Adrenal gland (tissue), 19 donors: ENCODE measurements at regions of chr3 and their contacts with region 1.

Region 1: DNA sequence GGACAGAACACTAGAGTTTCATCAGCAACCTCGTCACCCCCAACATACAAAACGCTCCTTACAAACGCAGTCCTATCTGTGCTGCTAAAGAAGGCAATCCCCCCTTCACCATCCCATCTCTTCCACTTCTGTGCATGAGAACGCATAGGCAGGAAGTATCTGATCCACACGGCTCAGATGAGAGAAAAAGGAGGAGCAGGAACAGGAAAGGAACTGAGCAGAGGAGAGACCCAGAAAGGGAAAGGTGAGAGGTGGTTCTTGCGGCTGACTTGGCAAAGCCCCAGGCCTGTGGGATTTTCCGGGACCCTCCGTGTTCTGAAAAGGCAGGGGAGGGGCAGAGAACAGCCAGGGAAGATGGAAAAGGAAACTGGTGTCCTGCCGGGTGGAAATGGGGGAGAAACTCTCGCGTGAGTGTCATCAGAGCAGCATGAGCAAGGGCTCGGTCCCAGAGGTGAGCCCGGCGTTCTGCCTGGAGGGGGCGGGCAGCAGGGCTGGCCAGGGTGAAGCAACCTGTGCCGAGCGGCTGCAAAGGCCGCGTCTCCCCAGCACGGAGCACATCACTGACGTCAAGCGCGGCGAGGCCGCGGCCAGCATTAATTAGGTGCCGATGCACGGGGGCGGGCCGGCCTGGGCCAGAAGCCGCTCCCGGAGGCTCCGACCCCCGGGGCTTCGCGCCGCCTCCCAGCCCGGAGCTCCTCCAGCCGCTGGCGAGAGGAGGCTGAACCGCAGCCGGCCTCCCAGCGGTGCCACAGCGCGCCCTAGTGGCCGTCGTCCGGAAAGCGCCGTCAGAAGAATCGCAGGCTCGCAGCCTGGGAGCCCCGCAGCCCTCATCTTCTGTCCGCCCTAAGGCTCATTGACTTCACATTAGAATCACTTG is 35.8 kb downstream of the CPN2 start:
- DNase-seq: peak; percentile 80 to 90 (median 85)
- H3K4me3 ChIP-seq: peak overlapping the region in 1 of 4 donors; percentile 44
- H3K27ac ChIP-seq: peak overlapping the region in 4 of 5 donors; percentile 35 to 75 (median 51)
- H3K4me1 ChIP-seq: peaks cover 10 to 23% of the 10 kb centered on the region in 2 donors
- H3K27me3 ChIP-seq: no peaks in the 10 kb centered on the region
- CTCF ChIP-seq: peak; percentile 83 to 98 (median 92)
- POLR2A ChIP-seq: peak in 1 of 2 donors; percentile 27

Region 2: DNA sequence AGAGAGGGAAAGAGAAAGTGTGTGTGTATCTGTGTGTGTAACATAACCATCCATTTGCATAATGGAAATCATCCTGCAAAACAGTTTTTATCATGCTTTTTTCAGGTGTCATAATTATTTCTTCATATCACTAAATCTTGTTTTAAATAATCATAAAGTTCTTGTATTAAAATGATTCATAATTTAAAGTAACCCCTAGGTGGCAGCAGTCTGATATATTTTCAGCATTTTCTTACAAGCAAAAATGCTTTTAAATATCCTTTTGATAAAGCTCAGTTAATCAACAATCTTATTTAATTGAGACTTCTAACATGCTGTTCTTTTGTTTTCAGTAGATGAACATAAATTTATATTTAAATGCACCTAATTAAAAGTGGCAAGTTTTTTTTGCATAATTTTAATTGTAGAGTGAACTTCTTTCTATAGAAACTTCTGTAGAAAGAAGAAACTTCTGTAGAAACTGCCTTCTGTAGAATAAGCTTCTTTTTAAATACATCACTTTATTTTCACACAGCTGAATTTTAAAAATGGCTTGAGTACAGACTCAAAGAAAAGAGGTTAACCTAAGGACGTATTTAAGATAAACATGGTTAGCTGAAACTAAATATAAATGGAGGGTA is 649.8 kb before region 1 on chr3:
- intact Hi-C with region 1: loop called in 1 of 2 experiments (anchors 10 kb)
- DNase-seq: no peak
- H3K4me3 ChIP-seq: no peak overlapping the region
- H3K27ac ChIP-seq: no peak overlapping the region
- H3K4me1 ChIP-seq: peaks cover 0 to 13% of the 10 kb centered on the region in 2 donors
- H3K27me3 ChIP-seq: no peaks in the 10 kb centered on the region
- CTCF ChIP-seq: peak; percentile 34 to 63 (median 52)
- POLR2A ChIP-seq: no peak

Region 3: DNA sequence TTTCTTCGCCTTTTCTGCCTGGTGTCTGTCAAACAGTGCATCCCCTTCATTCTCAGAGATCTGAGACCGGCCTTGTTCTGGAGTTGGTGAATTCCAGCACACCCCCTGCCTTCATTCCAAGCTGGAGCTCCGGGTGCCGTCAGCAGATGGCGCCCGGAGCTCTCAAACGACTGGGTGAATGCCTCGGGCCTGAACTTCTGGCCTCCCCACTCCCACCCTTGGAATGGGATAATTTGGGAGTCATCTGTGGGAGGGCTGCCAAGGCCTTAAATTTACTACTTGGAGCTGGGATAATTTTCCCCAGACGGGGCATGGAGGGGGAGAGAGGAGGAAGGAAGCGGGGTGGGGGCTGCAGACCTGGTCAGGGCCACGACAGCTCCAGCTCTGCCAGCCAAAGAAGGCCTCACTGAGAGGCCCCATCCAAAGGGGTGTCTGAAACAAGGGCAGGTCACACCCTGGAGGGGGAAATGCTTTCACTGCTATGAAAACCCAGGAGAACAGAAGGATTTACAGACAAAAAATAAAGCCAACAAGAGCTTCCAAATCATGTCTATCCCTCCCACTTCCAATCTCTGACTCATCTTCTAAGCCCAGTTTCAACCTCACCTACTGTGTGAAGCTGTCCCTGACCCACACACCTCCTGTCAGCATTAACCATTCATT is 534.4 kb before region 1 on chr3:
- intact Hi-C with region 1: loop called (anchors 2 to 5 kb)
- DNase-seq: peak; percentile 68 to 84 (median 79)
- H3K4me3 ChIP-seq: no peak overlapping the region
- H3K27ac ChIP-seq: peak overlapping the region in 1 of 5 donors; percentile 78
- H3K4me1 ChIP-seq: peaks cover 0 to 2% of the 10 kb centered on the region in 2 donors
- H3K27me3 ChIP-seq: peaks cover 16% of the 10 kb centered on the region
- CTCF ChIP-seq: peak; percentile 63 to 80 (median 69)
- POLR2A ChIP-seq: no peak

Region 4: DNA sequence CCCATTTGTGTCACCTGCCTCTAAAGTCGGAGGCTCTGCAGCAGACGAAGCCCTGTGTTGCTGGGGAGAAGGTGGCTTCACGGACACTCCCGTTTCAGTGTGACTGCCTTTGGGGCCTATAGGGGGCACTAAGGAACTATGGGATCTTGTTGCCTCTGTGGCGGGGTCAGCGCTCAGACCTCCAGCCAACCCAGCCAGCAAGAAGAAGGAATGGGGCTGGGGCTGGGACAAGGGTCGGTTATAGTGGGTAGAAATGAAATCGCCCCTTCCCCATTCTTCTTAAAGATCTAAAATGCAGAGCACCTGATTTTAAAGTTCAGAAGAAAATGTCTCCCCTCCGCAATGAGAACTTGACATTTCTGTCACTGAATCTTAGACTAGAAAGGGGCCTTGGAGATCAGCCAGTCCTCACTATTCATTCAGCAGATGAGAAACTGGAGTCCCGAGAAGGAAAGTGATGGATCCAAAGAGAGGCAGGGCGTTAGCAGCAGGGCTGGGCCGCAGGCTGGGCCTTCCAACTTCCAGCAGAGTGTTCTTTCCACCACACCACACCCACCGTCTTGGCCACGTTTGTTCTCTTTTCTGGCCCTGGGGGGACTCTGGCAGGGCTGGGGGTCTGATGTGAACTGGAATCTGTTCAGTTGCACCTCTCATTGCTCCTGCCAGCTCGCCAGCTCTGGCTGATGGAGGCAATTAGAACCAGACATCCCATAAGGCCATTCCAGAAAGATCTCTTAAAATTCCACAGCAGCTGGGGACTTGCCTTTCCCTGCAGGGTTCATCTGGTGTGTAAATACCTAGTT is 526.9 kb before region 1 on chr3:
- intact Hi-C with region 1: loop called (anchors 2 to 5 kb)
- DNase-seq: peak; percentile 48 to 77 (median 70)
- H3K4me3 ChIP-seq: no peak overlapping the region
- H3K27ac ChIP-seq: peak overlapping the region in 1 of 5 donors; percentile 30
- H3K4me1 ChIP-seq: no peaks in the 10 kb centered on the region
- H3K27me3 ChIP-seq: no peaks in the 10 kb centered on the region
- CTCF ChIP-seq: peak; percentile 57 to 86 (median 76)
- POLR2A ChIP-seq: no peak

Region 5: DNA sequence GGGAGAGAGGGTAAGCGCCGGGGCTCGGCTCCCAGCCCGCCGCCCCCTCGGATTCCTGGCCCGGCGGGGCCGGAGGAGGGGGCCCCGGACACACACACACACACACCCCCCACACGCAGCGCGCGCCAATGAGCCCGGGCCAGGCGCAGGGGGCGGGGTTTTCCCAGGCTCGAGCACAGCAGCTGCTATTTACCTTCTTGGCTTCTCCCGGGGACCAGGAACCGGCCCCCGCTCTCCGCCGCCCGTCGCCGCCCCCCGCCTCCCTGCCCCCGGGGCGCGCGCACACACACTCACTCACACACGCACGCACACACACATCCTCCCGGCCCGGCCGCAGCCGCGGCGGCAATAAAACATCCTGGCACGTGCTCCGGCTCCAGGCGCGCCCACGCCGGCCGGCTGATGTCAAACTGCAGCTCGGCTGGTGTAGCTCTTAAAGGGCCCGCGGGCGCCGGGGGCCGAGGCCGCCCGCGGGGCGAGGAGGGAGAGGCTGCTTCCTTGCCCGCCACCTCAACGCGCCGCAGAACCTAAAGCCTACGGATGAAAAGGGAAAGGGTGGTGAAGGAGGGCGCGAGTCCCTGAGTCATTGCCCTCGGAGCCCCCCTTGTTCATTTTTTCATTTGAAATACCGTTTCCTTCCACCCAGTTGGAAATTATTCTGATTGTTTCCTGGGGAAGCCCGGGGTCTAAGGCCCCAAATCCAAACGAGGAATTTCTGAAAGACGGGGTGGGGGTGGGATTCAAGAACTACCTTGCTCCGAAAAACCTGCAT is 180.4 kb before region 1 on chr3:
- intact Hi-C with region 1: loop called (anchors 2 to 5 kb)
- DNase-seq: peak; percentile 86 to 94 (median 92)
- H3K4me3 ChIP-seq: peak overlapping the region in 3 of 4 donors; percentile 4 to 58 (median 36)
- H3K27ac ChIP-seq: peak overlapping the region; percentile 88 to 97 (median 91)
- H3K4me1 ChIP-seq: peaks cover 10 to 35% of the 10 kb centered on the region in 2 donors
- H3K27me3 ChIP-seq: no peaks in the 10 kb centered on the region
- CTCF ChIP-seq: peak in 1 of 6 experiments; percentile 11
- POLR2A ChIP-seq: peak; percentile 17 to 83

Region 6: GRCh38 chr3:194176274-194176991 is 138.9 kb before region 1 on chr3:
- intact Hi-C with region 1: no loop called
- DNase-seq: no peak
- H3K4me3 ChIP-seq: no peak overlapping the region
- H3K27ac ChIP-seq: no peak overlapping the region
- H3K4me1 ChIP-seq: no peaks in the 10 kb centered on the region
- H3K27me3 ChIP-seq: no peaks in the 10 kb centered on the region
- CTCF ChIP-seq: no peak
- POLR2A ChIP-seq: no peak

Region 7: GRCh38 chr3:194265483-194265892 is 49.8 kb before region 1 on chr3:
- intact Hi-C with region 1: loop called in 1 of 2 experiments (anchors 5 kb)
- DNase-seq: peak; percentile 67 to 93 (median 87)
- H3K4me3 ChIP-seq: no peak overlapping the region
- H3K27ac ChIP-seq: peak overlapping the region in 4 of 5 donors; percentile 50 to 89 (median 66)
- H3K4me1 ChIP-seq: peaks cover 20 to 41% of the 10 kb centered on the region in 2 donors
- H3K27me3 ChIP-seq: no peaks in the 10 kb centered on the region
- CTCF ChIP-seq: no peak
- POLR2A ChIP-seq: peak in 1 of 2 donors; percentile 43